ENCODE measurements at regions of chr9 and their contacts with region 1.

Region 1: GRCh38 chr9:89941875-89942274 is 337.1 kb downstream of the GADD45G start:
- DNase-seq: peak in 1 of 2 donors; percentile 43
- ATAC-seq: peak; percentile 99 to 100
- H3K4me3 ChIP-seq: no peak overlapping the region
- H3K27ac ChIP-seq: peak overlapping the region; percentile 63 to 75 (median 68)
- H3K4me1 ChIP-seq: peaks cover 18 to 24% of the 10 kb centered on the region in 2 donors
- H3K27me3 ChIP-seq: no peaks in the 10 kb centered on the region
- CTCF ChIP-seq: no peak
- POLR2A ChIP-seq: no peak

Region 2: GRCh38 chr9:89999534-90000370 is 57.9 kb after region 1 on chr9:
- in situ Hi-C with region 1: no loop called
- intact Hi-C with region 1: loop called (anchors 5 kb)
- DNase-seq: peak; percentile 82 to 89
- ATAC-seq: peak; percentile 94 to 96
- H3K4me3 ChIP-seq: peak overlapping the region in 3 of 4 donors; percentile 36 to 42 (median 41)
- H3K27ac ChIP-seq: peak overlapping the region; percentile 72 to 89 (median 82)
- H3K4me1 ChIP-seq: peaks cover 45 to 46% of the 10 kb centered on the region in 2 donors
- H3K27me3 ChIP-seq: no peaks in the 10 kb centered on the region
- CTCF ChIP-seq: peak in 1 of 5 experiments; percentile 7
- POLR2A ChIP-seq: no peak

Measured in gastrocnemius medialis (tissue), 4 donors.